Transverse colon (tissue), 4 donors: ENCODE measurements at regions of chr15 and their contacts with region 1.

Region 1: GRCh38 chr15:72783563-72784237 is at the start of gene ADPGK:
- DNase-seq: peak; percentile 93
- H3K4me3 ChIP-seq: peak within 1 kb of the TSS; percentile 93 to 98 (median 98)
- H3K27ac ChIP-seq: peak within 1 kb of the TSS; percentile 95 to 99 (median 96)
- H3K4me1 ChIP-seq: peaks cover 8 to 31% (median 22%) of the 10 kb centered on the region in 4 donors
- H3K27me3 ChIP-seq: no peaks in the 10 kb centered on the region
- CTCF ChIP-seq: no peak
- EP300 ChIP-seq: peak; percentile 16
- POLR2A ChIP-seq: peak; percentile 90
- total RNA-seq, gene ADPGK: 31.7 to 87.2 (median 53.4) TPM

Region 2: GRCh38 chr15:72916897-72917296 is 133.2 kb after region 1 on chr15:
- in situ Hi-C with region 1: no loop called
- intact Hi-C with region 1: no loop called
- DNase-seq: no peak
- H3K4me3 ChIP-seq: no peak overlapping the region
- H3K27ac ChIP-seq: no peak overlapping the region
- H3K4me1 ChIP-seq: peaks cover 0 to 25% (median 8%) of the 10 kb centered on the region in 4 donors
- H3K27me3 ChIP-seq: no peaks in the 10 kb centered on the region
- CTCF ChIP-seq: no peak
- EP300 ChIP-seq: no peak
- POLR2A ChIP-seq: no peak

Region 3: GRCh38 chr15:73051811-73052678 is 268.3 kb after region 1 on chr15 and contains the start of gene NEO1:
- in situ Hi-C with region 1: no loop called
- intact Hi-C with region 1: loop called (anchors 5 kb)
- DNase-seq: peak; percentile 90
- H3K4me3 ChIP-seq: peak within 1 kb of the TSS; percentile 87 to 98 (median 94)
- H3K27ac ChIP-seq: peak within 1 kb of the TSS; percentile 97 to 99 (median 98)
- H3K4me1 ChIP-seq: peaks cover 0 to 47% (median 23%) of the 10 kb centered on the region in 4 donors
- H3K27me3 ChIP-seq: no peaks in the 10 kb centered on the region
- CTCF ChIP-seq: no peak
- EP300 ChIP-seq: no peak
- POLR2A ChIP-seq: peak; percentile 71
- total RNA-seq, gene NEO1: 100 to 188 (median 135) TPM

Region 4: DNA sequence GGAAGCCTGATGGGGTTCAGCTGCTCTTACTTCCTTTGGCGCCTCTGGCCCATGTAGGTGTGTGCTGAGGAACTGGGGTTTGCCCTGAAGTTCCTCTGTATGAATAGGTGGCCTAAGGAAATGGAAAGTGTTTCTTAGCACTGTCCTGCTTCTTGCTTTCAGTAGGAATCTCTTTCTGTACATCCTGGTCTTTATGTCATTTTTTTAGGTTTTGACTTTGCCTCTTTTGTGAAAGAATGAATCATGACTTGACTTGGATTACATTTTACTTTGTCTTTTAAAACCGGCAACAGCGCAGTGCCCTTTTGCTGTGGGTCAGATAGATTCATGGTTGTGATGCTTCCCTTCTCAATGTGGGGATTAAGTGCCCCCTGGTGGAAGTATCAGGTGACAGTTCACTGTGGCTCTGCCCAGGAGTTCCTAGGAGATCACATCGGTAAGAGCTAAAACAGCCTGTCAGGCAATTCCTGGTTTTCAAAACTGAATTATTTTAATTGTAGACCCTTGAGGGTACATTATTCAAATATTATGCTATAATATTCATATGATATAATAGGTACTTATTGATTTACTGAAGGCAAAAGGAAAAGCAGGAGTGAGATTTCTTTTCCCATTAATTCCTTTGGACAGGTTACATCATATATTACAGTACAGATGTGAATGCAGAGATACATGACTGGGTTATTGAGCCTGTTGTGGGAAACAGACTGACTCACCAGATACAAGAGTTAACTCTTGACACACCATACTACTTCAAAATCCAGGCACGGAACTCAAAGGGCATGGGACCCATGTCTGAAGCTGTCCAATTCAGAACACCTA is 489.7 kb after region 1 on chr15:
- in situ Hi-C with region 1: loop called in 3 of 4 experiments (anchors 25 kb)
- intact Hi-C with region 1: no loop called
- DNase-seq: peak; percentile 39
- H3K4me3 ChIP-seq: no peak overlapping the region
- H3K27ac ChIP-seq: no peak overlapping the region
- H3K4me1 ChIP-seq: no peaks in the 10 kb centered on the region
- H3K27me3 ChIP-seq: no peaks in the 10 kb centered on the region
- CTCF ChIP-seq: peak; percentile 56 to 77 (median 68)
- EP300 ChIP-seq: no peak
- POLR2A ChIP-seq: no peak

Region 5: GRCh38 chr15:74209997-74210671 is 1426.4 kb after region 1 on chr15:
- in situ Hi-C with region 1: no loop called
- intact Hi-C with region 1: no loop called
- DNase-seq: no peak
- H3K4me3 ChIP-seq: no peak overlapping the region
- H3K27ac ChIP-seq: no peak overlapping the region
- H3K4me1 ChIP-seq: no peaks in the 10 kb centered on the region
- H3K27me3 ChIP-seq: no peaks in the 10 kb centered on the region
- CTCF ChIP-seq: no peak
- EP300 ChIP-seq: no peak
- POLR2A ChIP-seq: no peak